PC-9 (cell line): ENCODE measurements at regions of chr3 and their contacts with region 1.

Region 1: DNA sequence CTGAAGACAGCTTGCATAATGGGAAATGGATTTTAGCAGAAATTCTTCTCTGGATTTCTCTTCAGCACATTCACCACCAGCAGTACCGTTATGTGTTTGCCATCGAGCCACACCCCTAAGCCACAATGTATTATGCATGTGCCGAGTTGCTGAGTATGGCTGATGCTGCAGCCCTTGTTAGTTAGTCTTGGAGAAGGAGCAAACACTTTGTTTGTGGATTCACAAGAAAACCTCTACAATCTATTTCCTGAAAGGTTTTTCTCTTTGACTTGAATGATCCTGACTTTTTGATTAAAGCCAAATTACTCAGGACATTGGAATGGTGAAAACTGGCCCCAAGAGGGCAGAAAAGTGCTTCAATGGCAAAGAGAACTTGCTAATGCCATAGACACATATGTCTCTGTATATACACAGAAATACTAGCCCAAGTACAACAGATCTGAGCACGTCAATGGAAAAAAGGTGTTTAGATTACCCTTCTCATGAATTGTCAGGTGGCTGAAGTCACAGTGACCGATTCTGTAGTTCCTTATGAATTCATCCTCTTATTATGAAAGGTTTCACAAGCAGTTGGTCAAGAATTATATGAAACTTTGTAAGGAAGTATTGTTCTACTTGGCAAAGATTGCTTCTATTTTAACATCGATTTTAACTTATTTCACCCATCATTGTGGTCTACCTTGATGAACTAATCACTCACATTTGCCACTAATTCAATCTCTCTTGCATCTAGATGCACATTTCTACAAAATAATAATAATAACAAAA is 103.0 kb downstream of the P3H2 start:
- DNase-seq: peak; percentile 55 to 65
- H3K4me3 ChIP-seq: no peak overlapping the region
- H3K27ac ChIP-seq: no peak overlapping the region
- H3K4me1 ChIP-seq: peaks cover 24% of the 10 kb centered on the region
- H3K27me3 ChIP-seq: no peaks in the 10 kb centered on the region
- CTCF ChIP-seq: peak; percentile 49; the same call in 1 of the 2 replicates

Region 2: DNA sequence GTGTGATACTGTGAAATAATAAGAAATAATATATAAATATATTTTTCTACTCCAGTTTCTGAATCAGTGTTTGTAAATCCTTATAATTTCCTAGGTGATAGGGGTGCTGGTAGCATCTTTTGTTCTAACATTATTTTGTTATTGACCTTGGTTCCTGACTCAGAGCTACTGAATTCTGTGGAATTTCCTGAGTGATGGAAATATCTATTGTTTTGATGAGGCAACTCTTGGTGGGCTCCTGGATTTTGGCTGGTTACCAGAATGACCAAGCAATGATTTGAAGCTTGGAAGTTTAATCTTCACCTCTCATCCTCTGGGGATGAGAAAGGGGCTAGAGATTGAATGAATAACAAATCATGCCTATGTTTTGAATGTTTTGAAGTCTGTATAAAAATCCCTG is 1486.5 kb before region 1 on chr3:
- CTCF ChIA-PET with region 1: no interaction called
- POLR2A ChIA-PET with region 1: no interaction called
- intact Hi-C with region 1: no loop called
- DNase-seq: no peak
- H3K4me3 ChIP-seq: no peak overlapping the region
- H3K27ac ChIP-seq: no peak overlapping the region
- H3K4me1 ChIP-seq: peaks cover 5% of the 10 kb centered on the region; the same call in 1 of the 2 replicates
- H3K27me3 ChIP-seq: no peaks in the 10 kb centered on the region
- CTCF ChIP-seq: no peak

Region 3: GRCh38 chr3:189961525-189962161 is 56.1 kb before region 1 on chr3:
- CTCF ChIA-PET with region 1: no interaction called
- POLR2A ChIA-PET with region 1: no interaction called
- intact Hi-C with region 1: loop called (anchors 1 kb)
- DNase-seq: peak; percentile 79 to 85
- H3K4me3 ChIP-seq: no peak overlapping the region
- H3K27ac ChIP-seq: no peak overlapping the region
- H3K4me1 ChIP-seq: peaks cover 7% of the 10 kb centered on the region
- H3K27me3 ChIP-seq: no peaks in the 10 kb centered on the region
- CTCF ChIP-seq: peak; percentile 100